ENCODE measurements at regions of chr6 and their contacts with region 1.

Region 1: GRCh38 chr6:167350731-167351655 is 26.1 kb downstream of the TTLL2 start:
- DNase-seq: peak; percentile 72
- H3K4me3 Mint-ChIP-seq: peak overlapping the region; percentile 84
- H3K27ac Mint-ChIP-seq: peak overlapping the region; percentile 78
- H3K4me1 Mint-ChIP-seq: peaks cover 24% of the 10 kb centered on the region
- H3K27me3 Mint-ChIP-seq: peaks cover 33% of the 10 kb centered on the region

Region 2: DNA sequence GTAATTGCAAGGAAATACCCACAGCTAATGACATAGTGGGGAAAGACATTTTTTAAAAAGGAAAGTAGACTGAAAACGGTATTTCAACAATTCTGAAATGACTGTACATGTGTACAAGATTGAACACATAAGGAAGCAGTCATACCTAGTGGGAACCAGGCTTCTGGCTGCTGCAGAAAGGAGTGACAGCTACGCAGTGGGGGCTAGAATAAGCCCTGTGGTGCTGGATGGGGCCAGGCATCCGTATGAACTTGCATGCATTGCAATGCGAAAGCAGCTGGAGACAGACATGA is 138.3 kb before region 1 on chr6:
- intact Hi-C with region 1: loop called (anchors 10 kb)
- DNase-seq: no peak
- H3K4me3 Mint-ChIP-seq: no peak overlapping the region
- H3K27ac Mint-ChIP-seq: peak overlapping the region; percentile 7
- H3K4me1 Mint-ChIP-seq: peaks cover 6% of the 10 kb centered on the region
- H3K27me3 Mint-ChIP-seq: peaks cover 3% of the 10 kb centered on the region

Region 3: DNA sequence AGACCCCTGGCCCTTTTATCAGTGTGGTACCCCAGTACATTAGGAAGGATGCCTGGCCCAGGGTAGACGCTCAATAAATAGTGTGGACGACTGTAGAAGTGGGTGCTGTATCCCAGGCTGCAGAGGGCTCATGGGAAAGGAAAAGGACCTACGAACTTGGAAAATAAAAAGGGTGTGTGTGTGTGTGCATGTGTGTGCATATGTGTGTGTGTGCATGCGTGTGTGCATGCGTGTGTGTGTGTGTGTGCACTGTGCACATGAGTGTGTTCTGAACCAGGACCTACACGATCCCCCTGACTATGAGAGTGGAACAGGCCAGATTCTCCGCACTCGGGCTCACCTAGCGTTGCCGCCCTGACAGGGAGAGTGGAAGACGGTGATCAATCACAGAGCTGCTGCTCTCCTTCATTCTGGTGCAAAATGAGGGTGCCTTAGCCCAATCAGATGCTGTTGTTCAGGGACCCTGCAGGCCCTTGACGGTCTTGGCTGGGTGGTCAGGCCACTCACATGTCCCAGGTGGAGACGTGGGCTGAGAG is 63.4 kb before region 1 on chr6:
- intact Hi-C with region 1: loop called (anchors 2 kb)
- DNase-seq: no peak
- H3K4me3 Mint-ChIP-seq: no peak overlapping the region
- H3K27ac Mint-ChIP-seq: no peak overlapping the region
- H3K4me1 Mint-ChIP-seq: no peaks in the 10 kb centered on the region
- H3K27me3 Mint-ChIP-seq: peaks cover 5% of the 10 kb centered on the region

Region 4: GRCh38 chr6:167668019-167668753 is 317.2 kb after region 1 on chr6:
- intact Hi-C with region 1: no loop called
- DNase-seq: no peak
- H3K4me3 Mint-ChIP-seq: no peak overlapping the region
- H3K27ac Mint-ChIP-seq: no peak overlapping the region
- H3K4me1 Mint-ChIP-seq: no peaks in the 10 kb centered on the region
- H3K27me3 Mint-ChIP-seq: peaks cover 7% of the 10 kb centered on the region

Region 5: GRCh38 chr6:167826230-167826895 is 475.4 kb after region 1 on chr6:
- intact Hi-C with region 1: loop called (anchors 1 kb)
- DNase-seq: peak; percentile 65
- H3K4me3 Mint-ChIP-seq: peak overlapping the region; percentile 89
- H3K27ac Mint-ChIP-seq: peak overlapping the region; percentile 61
- H3K4me1 Mint-ChIP-seq: peaks cover 52% of the 10 kb centered on the region
- H3K27me3 Mint-ChIP-seq: peaks cover 67% of the 10 kb centered on the region